ENCODE measurements at regions of chr3 and their contacts with region 1.

Region 1: DNA sequence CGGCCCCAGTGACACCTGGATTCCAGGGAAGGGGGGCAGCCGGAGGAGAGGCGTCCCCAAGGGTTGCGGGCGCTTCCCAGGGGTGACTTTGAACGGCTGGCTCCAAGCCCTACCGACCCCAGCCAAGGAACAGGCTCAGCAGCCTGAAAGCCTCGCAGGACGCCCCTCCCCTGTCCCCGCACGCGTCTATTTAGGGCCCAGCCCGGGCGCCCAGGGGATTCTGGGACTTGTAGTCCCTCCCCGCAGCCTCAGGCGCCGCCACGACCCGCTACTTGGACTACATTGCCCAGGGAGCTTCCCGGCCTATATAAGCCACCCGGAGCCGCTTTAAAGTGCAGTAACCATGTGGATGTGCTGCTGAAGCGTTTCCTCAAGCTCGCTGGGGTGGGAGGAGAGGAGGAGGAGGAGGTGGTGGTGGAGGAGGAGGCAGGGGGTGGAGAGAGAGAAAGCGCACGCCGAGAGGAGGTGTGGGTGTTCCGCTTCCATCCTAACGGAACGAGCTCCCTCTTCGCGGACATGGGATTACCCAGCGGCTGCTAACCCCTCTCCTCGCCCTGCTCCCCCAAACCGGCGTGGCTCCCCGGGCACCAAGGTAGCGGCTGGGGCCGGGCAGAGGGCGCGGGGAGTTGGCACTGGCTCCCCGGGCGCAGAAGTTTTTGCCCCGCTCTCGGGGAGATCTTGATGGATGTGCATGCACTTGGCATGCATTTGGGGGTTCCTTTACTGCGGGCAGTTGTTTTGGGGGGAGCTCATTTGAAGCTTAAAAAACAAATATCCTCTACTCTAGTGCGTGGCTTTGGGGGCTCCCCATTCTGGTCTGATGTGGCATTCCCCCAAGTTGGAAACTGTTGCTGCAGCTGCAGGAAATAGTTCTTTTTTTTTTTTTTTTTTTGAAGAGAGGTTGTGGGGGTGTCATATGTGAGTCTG is at the start of gene ITPR1:
- DNase-seq: peak; percentile 98
- H3K4me3 Mint-ChIP-seq: peak within 1 kb of the TSS; percentile 96
- H3K27ac Mint-ChIP-seq: peak within 1 kb of the TSS; percentile 87
- H3K4me1 Mint-ChIP-seq: peaks cover 44% of the 10 kb centered on the region
- H3K27me3 Mint-ChIP-seq: peaks cover 28% of the 10 kb centered on the region
- total RNA-seq, gene ITPR1: 117 and 137 TPM in 2 replicates

Region 2: DNA sequence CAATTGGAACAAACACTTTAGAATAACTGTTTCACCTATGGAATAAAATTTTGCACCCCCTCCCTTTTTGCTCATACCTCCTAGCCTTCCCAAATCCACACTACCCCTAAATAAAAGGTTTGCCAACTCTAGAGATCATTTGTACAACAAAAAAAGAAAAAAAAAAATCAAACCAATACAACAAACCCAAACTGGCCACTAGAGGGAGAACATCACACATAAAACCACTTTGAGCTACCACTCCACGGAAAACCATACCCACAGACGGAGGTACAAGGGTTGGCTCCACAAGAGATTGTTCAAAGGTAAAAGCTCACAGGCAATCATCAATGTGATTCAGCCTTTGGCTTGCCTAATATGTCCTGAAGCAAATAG is 142.5 kb before region 1 on chr3:
- intact Hi-C with region 1: loop called (anchors 1 kb)
- DNase-seq: peak; percentile 27
- H3K4me3 Mint-ChIP-seq: peak overlapping the region; percentile 43
- H3K27ac Mint-ChIP-seq: peak overlapping the region; percentile 74
- H3K4me1 Mint-ChIP-seq: peaks cover 23% of the 10 kb centered on the region
- H3K27me3 Mint-ChIP-seq: peaks cover 9% of the 10 kb centered on the region

Region 3: DNA sequence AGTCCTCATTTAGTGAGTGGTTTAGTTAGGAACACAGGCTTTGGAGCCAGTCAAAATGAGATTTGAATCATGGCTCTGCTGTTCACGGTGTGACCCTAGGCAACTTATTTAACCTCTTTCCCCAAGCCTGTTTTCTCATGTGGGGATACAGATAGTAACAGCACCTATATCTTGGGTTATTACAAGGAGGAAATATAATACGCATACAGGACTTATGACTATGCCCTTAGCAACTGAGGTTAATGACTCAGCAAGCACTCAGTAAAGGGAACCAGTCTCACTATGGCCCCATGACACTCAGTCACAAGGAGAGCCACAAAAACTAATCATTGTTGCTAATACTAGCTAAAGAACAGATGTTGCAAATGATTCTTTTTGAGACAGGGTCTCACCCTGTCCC is 72.2 kb before region 1 on chr3:
- intact Hi-C with region 1: loop called (anchors 1 kb)
- DNase-seq: no peak
- H3K4me3 Mint-ChIP-seq: no peak overlapping the region
- H3K27ac Mint-ChIP-seq: peak overlapping the region; percentile 69
- H3K4me1 Mint-ChIP-seq: peaks cover 43% of the 10 kb centered on the region
- H3K27me3 Mint-ChIP-seq: no peaks in the 10 kb centered on the region

Region 4: DNA sequence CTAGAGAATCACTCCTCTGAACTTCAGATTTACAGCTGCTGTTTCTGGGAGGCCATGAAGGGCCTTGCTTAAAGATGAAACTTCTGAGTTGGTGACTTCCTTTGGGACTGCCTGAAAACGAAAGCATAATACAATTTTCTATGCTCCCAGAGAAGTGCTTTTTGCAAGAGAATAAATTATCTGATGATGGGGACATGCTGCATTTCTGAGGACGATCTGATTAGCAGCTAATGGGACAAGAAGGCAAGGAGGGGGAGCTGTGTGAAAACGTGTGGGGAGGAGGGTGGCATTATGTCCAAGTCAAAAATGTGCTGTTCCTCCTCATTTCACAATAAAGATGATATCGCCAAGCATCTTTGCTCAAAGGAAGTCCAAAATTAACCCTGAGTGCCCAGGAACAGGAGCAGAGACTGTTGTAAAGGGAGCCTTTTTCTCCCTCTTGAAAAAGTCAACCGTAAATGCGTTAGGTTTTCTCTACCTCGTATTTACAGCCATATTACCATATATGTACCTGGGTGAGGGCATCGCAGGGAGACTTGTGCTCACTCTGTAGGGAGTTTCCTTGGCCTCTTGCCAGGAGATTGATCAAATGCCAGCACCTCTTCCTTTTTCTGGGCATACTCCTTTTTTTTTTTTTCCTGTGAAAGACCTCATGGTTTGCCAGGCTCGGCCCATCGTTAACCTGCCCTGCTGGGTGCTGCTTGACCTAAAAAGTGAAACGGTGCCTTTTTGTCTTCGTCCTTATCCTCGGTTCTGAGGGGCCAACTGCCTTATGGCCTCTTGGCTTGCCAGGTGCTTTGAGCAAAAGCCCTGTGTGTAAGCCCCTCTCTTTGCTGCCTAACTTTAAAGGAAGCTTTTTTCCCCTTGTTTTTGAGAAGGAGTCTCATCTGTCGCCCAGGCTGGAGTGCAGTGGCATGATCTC is 11.3 kb after region 1 on chr3:
- intact Hi-C with region 1: loop called (anchors 1 kb)
- DNase-seq: no peak
- H3K4me3 Mint-ChIP-seq: peak overlapping the region; percentile 79
- H3K27ac Mint-ChIP-seq: peak overlapping the region; percentile 90
- H3K4me1 Mint-ChIP-seq: peaks cover 43% of the 10 kb centered on the region
- H3K27me3 Mint-ChIP-seq: no peaks in the 10 kb centered on the region

Region 5: DNA sequence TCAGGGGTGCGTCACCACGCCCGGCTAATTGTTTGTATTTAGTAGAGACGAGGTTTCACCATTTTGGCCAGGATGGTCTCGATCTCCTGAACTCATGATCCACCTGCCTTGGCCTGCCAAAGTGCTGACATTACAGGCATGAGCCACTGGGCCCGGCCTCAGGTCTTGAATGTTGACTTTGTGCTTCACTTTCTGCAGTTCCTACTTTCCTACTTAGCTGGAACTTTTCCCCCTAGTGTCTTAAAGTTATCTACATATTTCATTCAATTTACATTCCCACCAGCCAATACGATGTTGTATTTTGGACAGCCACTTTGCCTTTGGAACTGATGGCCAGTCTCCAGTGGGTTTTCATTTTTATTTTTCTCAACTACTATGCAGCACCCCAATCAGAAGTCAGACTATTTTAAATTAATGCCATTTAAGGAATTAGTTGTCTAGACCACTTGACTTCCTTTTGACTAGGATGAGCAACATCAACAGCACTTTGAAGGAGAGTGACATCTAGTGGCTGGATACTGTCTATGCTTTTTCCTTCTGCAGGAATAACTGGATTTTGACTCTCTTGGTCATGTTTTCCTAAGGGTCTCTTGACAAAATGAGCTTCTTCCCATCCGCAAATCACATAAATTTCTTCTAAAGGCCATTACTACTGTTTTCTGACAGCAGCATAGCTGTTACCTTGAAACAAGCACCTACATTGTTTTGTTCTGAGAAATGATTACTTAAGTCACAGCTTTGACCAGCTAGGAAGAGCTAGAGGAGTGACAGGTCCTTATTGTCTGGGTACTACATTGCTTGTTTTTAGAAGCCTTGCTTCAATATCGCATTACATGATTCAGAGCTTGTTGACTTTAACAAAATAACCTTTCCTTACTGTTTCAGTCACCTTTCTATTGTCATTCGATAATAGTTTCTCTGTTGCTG is 140.1 kb after region 1 on chr3:
- intact Hi-C with region 1: loop called (anchors 5 kb)
- DNase-seq: no peak
- H3K4me3 Mint-ChIP-seq: no peak overlapping the region
- H3K27ac Mint-ChIP-seq: no peak overlapping the region
- H3K4me1 Mint-ChIP-seq: peaks cover 8% of the 10 kb centered on the region
- H3K27me3 Mint-ChIP-seq: no peaks in the 10 kb centered on the region

Region 6: GRCh38 chr3:5187156-5187919 is 694.1 kb after region 1 on chr3 and contains the start of gene EDEM1:
- intact Hi-C with region 1: loop called (anchors 1 kb)
- DNase-seq: peak; percentile 95
- H3K4me3 Mint-ChIP-seq: peak within 1 kb of the TSS; percentile 99
- H3K27ac Mint-ChIP-seq: peak within 1 kb of the TSS; percentile 100
- H3K4me1 Mint-ChIP-seq: peaks cover 27% of the 10 kb centered on the region
- H3K27me3 Mint-ChIP-seq: no peaks in the 10 kb centered on the region
- total RNA-seq, gene EDEM1: 183 and 187 TPM in 2 replicates